CD4-positive, alpha-beta memory T cell (primary cell): ENCODE measurements at regions of chr13 and their contacts with region 1.

Region 1: DNA sequence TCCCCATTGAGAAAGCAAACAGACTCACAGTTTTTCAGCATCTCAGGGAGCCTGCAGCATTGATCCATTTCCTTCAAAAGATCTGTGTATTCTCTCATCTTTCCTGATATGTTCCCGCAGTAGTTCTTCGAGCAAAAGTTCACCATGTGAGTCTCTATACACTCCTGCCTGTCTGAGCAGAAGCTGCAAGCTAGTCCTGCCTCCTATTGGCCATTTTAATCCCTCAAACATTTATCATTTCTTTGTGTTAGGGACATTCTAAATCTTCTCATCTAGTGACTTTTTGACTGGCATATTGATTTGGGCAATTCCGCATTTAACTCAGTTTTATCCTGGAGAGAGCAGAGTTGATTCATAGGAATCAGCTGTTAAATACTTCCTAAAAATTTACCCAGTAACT is 660.4 kb upstream of the KLF12 start:
- DNase-seq: no peak
- H3K4me3 ChIP-seq: no peak overlapping the region
- H3K4me3 Mint-ChIP-seq: no peak overlapping the region
- H3K27ac ChIP-seq: no peak overlapping the region
- H3K27ac Mint-ChIP-seq: no peak overlapping the region
- H3K4me1 ChIP-seq: no peaks in the 10 kb centered on the region
- H3K4me1 Mint-ChIP-seq: no peaks in the 10 kb centered on the region
- H3K27me3 ChIP-seq: no peaks in the 10 kb centered on the region
- H3K27me3 Mint-ChIP-seq: peaks cover 5 to 17% of the 10 kb centered on the region in 2 donors

Region 2: GRCh38 chr13:73598021-73598712 is 1196.4 kb before region 1 on chr13:
- CTCF ChIA-PET with region 1: no interaction called
- POLR2A ChIA-PET with region 1: no interaction called
- intact Hi-C with region 1: no loop called
- DNase-seq: no peak
- H3K4me3 ChIP-seq: no peak overlapping the region
- H3K4me3 Mint-ChIP-seq: no peak overlapping the region
- H3K27ac ChIP-seq: no peak overlapping the region
- H3K27ac Mint-ChIP-seq: no peak overlapping the region
- H3K4me1 ChIP-seq: peaks cover 9% of the 10 kb centered on the region
- H3K4me1 Mint-ChIP-seq: peaks cover 6 to 11% (median 7%) of the 10 kb centered on the region in 4 donors
- H3K27me3 ChIP-seq: no peaks in the 10 kb centered on the region
- H3K27me3 Mint-ChIP-seq: no peaks in the 10 kb centered on the region

Region 3: DNA sequence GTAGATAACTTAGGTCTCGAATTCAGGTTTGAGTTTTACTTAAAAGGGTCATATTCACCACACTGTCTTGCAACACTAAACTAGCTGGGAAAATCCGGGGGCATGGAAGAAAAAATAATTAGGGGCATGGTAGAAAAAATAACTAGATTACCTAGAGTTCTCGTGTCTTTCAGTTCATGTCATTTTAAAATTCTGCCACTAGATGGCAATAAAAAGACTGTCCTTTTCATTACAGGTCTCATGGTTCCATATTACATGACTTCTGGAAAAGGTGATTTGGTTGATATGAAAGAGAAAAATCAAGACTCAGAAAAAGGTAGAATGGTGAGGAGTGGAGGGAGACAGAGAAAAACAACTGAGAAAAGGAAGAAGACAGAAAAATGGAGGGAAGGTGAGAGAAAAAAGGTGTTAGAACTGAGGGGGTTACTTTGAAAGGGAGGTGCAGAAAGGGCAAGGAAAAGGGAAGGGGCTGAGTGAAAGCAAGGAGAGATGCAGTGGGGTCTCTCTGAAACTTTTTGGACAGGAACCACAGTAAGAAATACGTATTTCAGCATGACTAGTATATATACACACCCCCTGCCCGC is 959.4 kb before region 1 on chr13:
- CTCF ChIA-PET with region 1: no interaction called
- POLR2A ChIA-PET with region 1: no interaction called
- intact Hi-C with region 1: loop called (anchors 5 kb)
- DNase-seq: peak in 4 of 5 donors; percentile 45 to 56 (median 49)
- H3K4me3 ChIP-seq: no peak overlapping the region
- H3K4me3 Mint-ChIP-seq: no peak overlapping the region
- H3K27ac ChIP-seq: no peak overlapping the region
- H3K27ac Mint-ChIP-seq: no peak overlapping the region
- H3K4me1 ChIP-seq: peaks cover 42% of the 10 kb centered on the region
- H3K4me1 Mint-ChIP-seq: peaks cover 34 to 69% (median 47%) of the 10 kb centered on the region in 4 donors
- H3K27me3 ChIP-seq: no peaks in the 10 kb centered on the region
- H3K27me3 Mint-ChIP-seq: no peaks in the 10 kb centered on the region

Region 4: GRCh38 chr13:74732736-74733385 is 61.7 kb before region 1 on chr13:
- CTCF ChIA-PET with region 1: no interaction called
- POLR2A ChIA-PET with region 1: no interaction called
- intact Hi-C with region 1: no loop called
- DNase-seq: no peak
- H3K4me3 ChIP-seq: no peak overlapping the region
- H3K4me3 Mint-ChIP-seq: no peak overlapping the region
- H3K27ac ChIP-seq: no peak overlapping the region
- H3K27ac Mint-ChIP-seq: no peak overlapping the region
- H3K4me1 ChIP-seq: no peaks in the 10 kb centered on the region
- H3K4me1 Mint-ChIP-seq: no peaks in the 10 kb centered on the region
- H3K27me3 ChIP-seq: no peaks in the 10 kb centered on the region
- H3K27me3 Mint-ChIP-seq: peaks cover 0 to 4% of the 10 kb centered on the region in 2 donors